B cell (primary cell): ENCODE measurements at regions of chr3 and their contacts with region 1.

Region 1: DNA sequence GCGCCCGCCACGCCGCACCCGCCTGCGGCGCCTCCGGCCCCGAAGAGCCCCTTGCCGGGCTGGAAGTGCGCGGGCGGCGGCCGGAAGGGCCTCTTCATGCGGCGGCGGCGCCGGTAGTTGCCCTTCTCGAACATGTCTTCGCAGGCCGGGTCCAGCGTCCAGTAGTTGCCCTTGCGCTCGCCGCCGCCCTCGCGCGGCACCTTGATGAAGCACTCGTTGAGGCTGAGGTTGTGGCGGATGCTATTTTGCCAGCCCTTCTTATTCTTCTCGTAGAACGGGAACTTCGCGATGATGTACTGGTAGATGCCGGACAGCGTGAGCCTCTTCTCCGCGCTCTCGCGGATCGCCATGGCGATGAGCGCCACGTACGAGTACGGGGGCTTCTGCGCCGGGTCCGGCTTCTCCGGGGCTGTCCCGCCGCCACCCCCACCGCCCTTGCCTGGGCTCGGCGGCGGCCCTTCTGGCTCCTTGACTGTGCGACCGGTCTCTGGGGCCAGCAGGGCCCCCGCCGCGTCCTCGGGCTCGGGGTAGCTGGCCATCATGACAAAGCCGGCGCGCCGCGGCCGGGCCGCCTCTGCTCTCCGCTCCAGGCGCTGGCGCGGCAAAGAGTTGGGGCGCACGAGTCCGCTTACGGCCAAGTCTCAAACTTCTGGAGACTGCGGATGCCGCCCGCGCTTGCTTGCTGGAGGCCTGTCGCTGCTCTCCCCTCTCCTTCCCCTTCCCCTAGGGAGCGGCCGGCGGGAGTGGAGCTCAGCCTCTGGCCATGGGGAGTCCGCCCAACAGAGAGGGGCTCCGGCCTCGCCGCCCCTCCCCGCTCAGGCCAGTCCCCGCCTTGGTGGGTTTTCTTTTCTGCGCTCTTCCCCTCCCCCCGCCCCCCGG is 517 bp downstream of the FOXL2 start:
- DNase-seq: peak; percentile 66
- ATAC-seq: no peak
- H3K4me3 ChIP-seq: peak overlapping the region in 4 of 5 experiments; percentile 19 to 47 (median 42)
- H3K4me3 Mint-ChIP-seq: peak overlapping the region; percentile 80
- H3K27ac ChIP-seq: no peak overlapping the region
- H3K27ac Mint-ChIP-seq: peak overlapping the region; percentile 50
- H3K4me1 ChIP-seq: peaks cover 45 to 71% of the 10 kb centered on the region in 2 donors
- H3K4me1 Mint-ChIP-seq: peaks cover 50% of the 10 kb centered on the region
- H3K27me3 ChIP-seq: peaks cover under 1 to 95% (median 67%) of the 10 kb centered on the region in 4 experiments
- H3K27me3 Mint-ChIP-seq: peaks cover 73% of the 10 kb centered on the region
- CTCF ChIP-seq: no peak

Region 2: DNA sequence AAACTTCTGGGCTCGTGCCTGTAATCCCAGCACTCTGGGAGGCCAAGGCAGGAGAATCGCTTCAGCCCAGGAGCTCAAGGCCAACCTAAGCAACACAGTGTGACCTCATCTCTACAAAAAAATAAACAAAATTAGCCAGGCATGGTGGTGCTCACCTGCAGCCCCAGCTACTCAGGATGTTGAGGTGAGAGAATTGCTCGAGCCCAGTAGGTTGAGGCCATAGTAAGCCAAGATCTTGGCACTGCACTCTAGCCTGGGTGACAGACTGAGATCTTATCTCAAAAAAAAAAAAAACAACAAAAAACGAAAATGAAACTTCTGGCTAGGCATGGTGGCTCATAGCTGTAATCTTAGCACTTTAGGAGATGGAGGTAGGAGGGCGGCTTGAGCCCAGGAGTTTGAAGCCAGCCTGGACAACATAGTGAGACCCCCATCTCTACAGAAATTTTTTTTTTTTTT is 165.4 kb before region 1 on chr3:
- CTCF ChIA-PET with region 1: no interaction called
- POLR2A ChIA-PET with region 1: no interaction called
- intact Hi-C with region 1: no loop called
- DNase-seq: no peak
- ATAC-seq: no peak
- H3K4me3 ChIP-seq: no peak overlapping the region
- H3K4me3 Mint-ChIP-seq: no peak overlapping the region
- H3K27ac ChIP-seq: no peak overlapping the region
- H3K27ac Mint-ChIP-seq: no peak overlapping the region
- H3K4me1 ChIP-seq: no peaks in the 10 kb centered on the region
- H3K4me1 Mint-ChIP-seq: peaks cover 7% of the 10 kb centered on the region
- H3K27me3 ChIP-seq: no peaks in the 10 kb centered on the region
- H3K27me3 Mint-ChIP-seq: no peaks in the 10 kb centered on the region
- CTCF ChIP-seq: no peak

Region 3: DNA sequence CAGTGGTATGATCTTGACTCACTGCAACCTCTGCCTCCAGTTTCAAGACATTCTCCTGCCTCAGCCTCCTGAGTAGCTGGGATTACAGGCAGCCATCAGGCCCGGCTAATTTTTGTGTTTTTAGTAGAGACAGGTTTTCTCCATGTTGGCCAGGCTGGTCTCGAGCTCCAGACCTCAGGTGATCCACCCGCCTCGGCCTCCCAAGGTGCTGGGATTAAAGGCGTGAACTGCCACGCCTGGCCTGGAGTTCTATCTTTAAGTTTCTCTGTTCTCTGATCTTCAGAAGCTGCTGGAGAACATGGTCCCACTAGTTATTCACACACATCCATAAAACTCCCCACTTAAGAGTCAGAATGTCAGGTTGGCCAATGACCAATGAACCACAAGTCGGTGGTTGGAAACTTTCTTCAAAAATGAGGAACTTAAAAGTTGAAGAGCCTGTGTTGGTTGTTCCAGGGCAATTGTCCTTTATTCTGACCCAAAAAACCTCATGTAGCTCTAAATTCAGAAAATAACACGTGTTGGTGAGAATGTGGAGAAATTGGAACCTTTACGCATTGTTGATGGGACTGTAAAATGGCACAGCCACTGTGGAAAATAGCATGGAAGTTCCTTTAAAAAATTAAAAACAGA is 55.7 kb before region 1 on chr3:
- CTCF ChIA-PET with region 1: no interaction called
- POLR2A ChIA-PET with region 1: no interaction called
- intact Hi-C with region 1: no loop called
- DNase-seq: peak; percentile 38
- ATAC-seq: peak; percentile 49
- H3K4me3 ChIP-seq: no peak overlapping the region
- H3K4me3 Mint-ChIP-seq: peak overlapping the region; percentile 55
- H3K27ac ChIP-seq: no peak overlapping the region
- H3K27ac Mint-ChIP-seq: peak overlapping the region; percentile 71
- H3K4me1 ChIP-seq: peaks cover 6 to 10% of the 10 kb centered on the region in 2 donors
- H3K4me1 Mint-ChIP-seq: peaks cover 17% of the 10 kb centered on the region
- H3K27me3 ChIP-seq: no peaks in the 10 kb centered on the region
- H3K27me3 Mint-ChIP-seq: no peaks in the 10 kb centered on the region
- CTCF ChIP-seq: no peak

Region 4: DNA sequence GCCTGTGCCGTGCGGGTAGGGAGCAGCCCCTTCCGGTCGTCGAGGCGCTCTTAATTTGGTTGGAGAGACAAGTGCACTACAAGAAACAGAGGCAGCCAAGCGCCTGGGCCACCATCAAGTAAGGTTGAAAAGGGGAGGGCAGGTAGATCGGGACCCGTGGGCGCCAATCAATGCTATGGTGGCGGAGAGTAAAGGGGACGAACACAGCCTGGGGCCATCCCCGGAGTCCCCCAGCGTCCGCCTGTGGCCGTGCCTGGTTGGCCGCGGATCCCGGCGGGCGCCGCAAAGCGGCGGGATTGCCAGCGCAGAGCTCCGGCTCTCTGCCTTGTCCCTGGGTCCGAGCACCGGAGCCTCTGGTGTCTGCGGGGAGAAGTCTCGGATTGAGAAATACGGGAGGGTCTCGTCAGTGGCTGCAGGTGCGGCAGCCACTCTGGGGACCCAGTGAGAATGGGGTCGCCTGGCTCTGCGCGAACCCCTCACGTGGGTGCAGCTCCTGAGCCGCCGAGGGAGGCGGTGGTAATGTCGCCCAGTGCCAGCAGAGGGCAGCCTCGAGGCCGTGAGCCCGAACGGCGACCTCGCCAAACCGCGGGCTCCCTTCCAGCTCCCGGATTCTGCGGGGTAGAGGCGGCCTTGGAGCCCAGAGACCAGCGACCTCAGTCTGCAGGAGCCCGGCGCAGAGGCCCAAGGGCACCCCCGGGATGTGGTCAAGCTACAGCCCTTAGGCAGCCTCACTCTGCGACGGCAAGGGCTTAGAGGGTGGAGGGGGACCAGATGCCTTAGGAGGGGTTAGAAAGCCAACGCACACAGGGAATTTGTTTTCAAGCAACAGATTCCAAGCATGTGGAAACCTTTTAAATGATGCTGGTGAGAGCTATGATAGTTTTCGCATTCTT is 10.3 kb before region 1 on chr3:
- CTCF ChIA-PET with region 1: interaction called, 13 read pairs
- POLR2A ChIA-PET with region 1: no interaction called
- intact Hi-C with region 1: no loop called
- DNase-seq: peak; percentile 77
- ATAC-seq: peak; percentile 87
- H3K4me3 ChIP-seq: peak overlapping the region in 4 of 5 experiments; percentile 10 to 55 (median 38)
- H3K4me3 Mint-ChIP-seq: peak overlapping the region; percentile 80
- H3K27ac ChIP-seq: no peak overlapping the region
- H3K27ac Mint-ChIP-seq: no peak overlapping the region
- H3K4me1 ChIP-seq: peaks cover 46 to 47% of the 10 kb centered on the region in 2 donors
- H3K4me1 Mint-ChIP-seq: peaks cover 32% of the 10 kb centered on the region
- H3K27me3 ChIP-seq: peaks cover 0 to 80% (median 58%) of the 10 kb centered on the region in 4 experiments
- H3K27me3 Mint-ChIP-seq: peaks cover 66% of the 10 kb centered on the region
- CTCF ChIP-seq: peak; percentile 97

Region 5: GRCh38 chr3:139491027-139491700 is 544.7 kb after region 1 on chr3:
- CTCF ChIA-PET with region 1: no interaction called
- POLR2A ChIA-PET with region 1: no interaction called
- intact Hi-C with region 1: no loop called
- DNase-seq: no peak
- ATAC-seq: no peak
- H3K4me3 ChIP-seq: no peak overlapping the region
- H3K4me3 Mint-ChIP-seq: no peak overlapping the region
- H3K27ac ChIP-seq: no peak overlapping the region
- H3K27ac Mint-ChIP-seq: no peak overlapping the region
- H3K4me1 ChIP-seq: no peaks in the 10 kb centered on the region
- H3K4me1 Mint-ChIP-seq: no peaks in the 10 kb centered on the region
- H3K27me3 ChIP-seq: no peaks in the 10 kb centered on the region
- H3K27me3 Mint-ChIP-seq: no peaks in the 10 kb centered on the region
- CTCF ChIP-seq: no peak

Region 6: GRCh38 chr3:139533781-139534443 is 587.5 kb after region 1 on chr3:
- CTCF ChIA-PET with region 1: no interaction called
- POLR2A ChIA-PET with region 1: no interaction called
- intact Hi-C with region 1: no loop called
- DNase-seq: no peak
- ATAC-seq: no peak
- H3K4me3 ChIP-seq: no peak overlapping the region
- H3K4me3 Mint-ChIP-seq: no peak overlapping the region
- H3K27ac ChIP-seq: no peak overlapping the region
- H3K27ac Mint-ChIP-seq: no peak overlapping the region
- H3K4me1 ChIP-seq: no peaks in the 10 kb centered on the region
- H3K4me1 Mint-ChIP-seq: peaks cover under 1% of the 10 kb centered on the region
- H3K27me3 ChIP-seq: peaks cover 0 to 9% (median under 1%) of the 10 kb centered on the region in 4 experiments
- H3K27me3 Mint-ChIP-seq: peaks cover 24% of the 10 kb centered on the region
- CTCF ChIP-seq: no peak